Vagina (tissue), 2 donors: ENCODE measurements at regions of chr18 and their contacts with region 1.

Region 1: GRCh38 chr18:6885992-6886796 is 156.7 kb downstream of the ARHGAP28 start:
- DNase-seq: no peak
- H3K4me3 ChIP-seq: no peak overlapping the region
- H3K27ac ChIP-seq: no peak overlapping the region
- H3K4me1 ChIP-seq: peaks cover 16% of the 10 kb centered on the region
- H3K27me3 ChIP-seq: no peaks in the 10 kb centered on the region
- CTCF ChIP-seq: peak in 2 of 3 experiments; percentile 73 to 78
- POLR2A ChIP-seq: no peak

Region 2: GRCh38 chr18:6543330-6543908 is 342.8 kb before region 1 on chr18:
- intact Hi-C with region 1: loop called (anchors 2 kb)
- DNase-seq: no peak
- H3K4me3 ChIP-seq: no peak overlapping the region
- H3K27ac ChIP-seq: no peak overlapping the region
- H3K4me1 ChIP-seq: peaks cover 9% of the 10 kb centered on the region
- H3K27me3 ChIP-seq: no peaks in the 10 kb centered on the region
- CTCF ChIP-seq: peak in 2 of 3 experiments; percentile 58 to 72
- POLR2A ChIP-seq: no peak

Region 3: DNA sequence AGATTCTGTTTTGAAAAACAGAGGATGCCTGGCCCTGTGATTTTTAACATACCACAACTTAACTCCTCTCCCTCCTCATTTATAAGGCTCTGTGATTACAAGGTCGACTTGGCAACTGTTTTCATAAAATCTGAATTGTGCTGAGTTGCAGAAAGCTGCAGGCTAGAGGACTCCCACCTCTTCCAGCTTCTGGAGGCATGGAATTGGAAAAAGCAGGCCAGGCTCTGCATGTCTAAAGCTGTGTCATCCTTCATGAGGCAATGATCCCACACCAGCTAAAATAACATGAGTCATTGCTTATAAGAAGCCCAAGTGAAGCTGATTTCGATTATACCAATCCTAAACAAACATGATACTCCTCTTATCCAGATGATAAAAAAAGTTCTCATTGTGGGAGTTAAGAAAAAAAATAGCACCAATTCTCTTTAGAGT is 144.9 kb before region 1 on chr18:
- intact Hi-C with region 1: loop called (anchors 5 kb)
- DNase-seq: no peak
- H3K4me3 ChIP-seq: no peak overlapping the region
- H3K27ac ChIP-seq: peak overlapping the region; percentile 64
- H3K4me1 ChIP-seq: peaks cover 29% of the 10 kb centered on the region
- H3K27me3 ChIP-seq: no peaks in the 10 kb centered on the region
- CTCF ChIP-seq: no peak
- POLR2A ChIP-seq: no peak

Region 4: GRCh38 chr18:7233134-7233810 is 347.1 kb after region 1 on chr18:
- intact Hi-C with region 1: no loop called
- DNase-seq: no peak
- H3K4me3 ChIP-seq: no peak overlapping the region
- H3K27ac ChIP-seq: no peak overlapping the region
- H3K4me1 ChIP-seq: no peaks in the 10 kb centered on the region
- H3K27me3 ChIP-seq: no peaks in the 10 kb centered on the region
- CTCF ChIP-seq: no peak
- POLR2A ChIP-seq: no peak